ENCODE measurements at regions of chr3 and their contacts with region 1.

Region 1: GRCh38 chr3:126357295-126358037 is at the start of gene KLF15:
- DNase-seq: peak; percentile 87 to 95 (median 92)
- H3K4me3 ChIP-seq: peak within 1 kb of the TSS; percentile 91
- H3K27ac ChIP-seq: peak within 1 kb of the TSS; percentile 95 to 99
- H3K4me1 ChIP-seq: peaks cover 23% of the 10 kb centered on the region
- H3K27me3 ChIP-seq: no peaks in the 10 kb centered on the region
- CTCF ChIP-seq: no peak
- EP300 ChIP-seq: no peak
- POLR2A ChIP-seq: peak; percentile 85
- total RNA-seq, gene KLF15: 23.2 to 83.3 (median 40.0) TPM

Region 2: DNA sequence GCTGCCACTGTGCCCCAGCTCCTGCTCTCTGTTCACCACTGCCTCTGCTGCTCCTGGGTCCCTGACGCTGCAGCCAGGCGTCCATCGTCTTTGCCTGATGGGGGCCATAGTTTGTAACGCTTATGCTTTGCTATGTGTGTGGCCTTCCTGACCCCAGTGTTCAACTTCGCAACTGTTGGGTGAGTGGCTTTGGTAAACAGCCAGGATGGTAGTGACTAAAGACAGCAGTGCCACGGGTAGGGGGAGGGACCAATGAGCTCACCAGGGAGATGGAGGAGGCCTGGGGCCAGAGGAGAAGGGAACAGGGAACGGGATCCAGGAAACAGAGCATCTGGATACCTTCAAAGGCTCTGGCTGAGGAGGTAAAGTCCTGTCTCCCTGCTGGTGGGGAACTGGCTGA is 101.2 kb before region 1 on chr3:
- intact Hi-C with region 1: no loop called
- DNase-seq: no peak
- H3K4me3 ChIP-seq: no peak overlapping the region
- H3K27ac ChIP-seq: no peak overlapping the region
- H3K4me1 ChIP-seq: peaks cover 2% of the 10 kb centered on the region
- H3K27me3 ChIP-seq: no peaks in the 10 kb centered on the region
- CTCF ChIP-seq: no peak
- EP300 ChIP-seq: no peak
- POLR2A ChIP-seq: no peak

Region 3: DNA sequence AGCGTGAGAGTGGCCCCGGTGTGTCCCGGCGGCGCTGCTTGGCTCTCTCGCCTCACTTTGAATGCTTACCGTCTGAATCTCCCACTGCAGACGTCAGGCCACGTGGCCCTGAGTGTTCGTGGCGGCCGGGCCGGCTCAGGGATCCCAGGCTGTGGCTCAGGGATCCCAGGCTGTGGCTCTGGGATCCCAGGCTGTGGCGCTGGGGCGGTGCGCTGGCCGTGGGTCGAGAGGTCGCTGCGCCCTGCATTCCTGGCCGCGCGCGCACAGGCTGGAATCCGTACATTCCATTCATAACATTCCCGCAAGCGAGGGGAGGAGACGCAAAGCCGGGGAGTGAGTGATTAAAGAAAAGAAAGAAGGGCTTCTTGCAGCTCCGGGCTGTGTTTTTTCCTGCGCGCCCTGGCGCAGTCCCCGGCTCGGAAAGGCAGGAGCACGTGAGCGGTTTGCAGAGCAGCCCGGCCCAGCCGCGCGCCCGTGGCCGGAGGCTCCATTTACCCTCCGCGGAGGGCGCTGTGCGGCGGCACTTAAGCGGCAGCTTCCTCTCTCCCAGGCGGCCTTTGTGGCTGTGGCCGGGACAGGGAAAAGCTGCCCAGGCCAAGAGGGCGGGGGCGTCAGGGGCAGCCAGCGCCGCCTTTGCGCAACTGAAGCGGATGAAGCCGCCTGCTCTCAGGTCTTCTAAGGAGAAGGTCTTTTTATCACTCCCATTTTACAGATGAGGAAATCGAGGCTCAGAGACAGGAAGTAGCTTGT is 90.1 kb before region 1 on chr3:
- intact Hi-C with region 1: loop called in 3 of 4 experiments (anchors 2 to 5 kb)
- DNase-seq: peak; percentile 77 to 90 (median 82)
- H3K4me3 ChIP-seq: peak overlapping the region; percentile 27
- H3K27ac ChIP-seq: peak overlapping the region; percentile 83 to 90
- H3K4me1 ChIP-seq: peaks cover 13% of the 10 kb centered on the region
- H3K27me3 ChIP-seq: no peaks in the 10 kb centered on the region
- CTCF ChIP-seq: peak in 1 of 3 donors; percentile 15
- EP300 ChIP-seq: peak; percentile 48
- POLR2A ChIP-seq: peak; percentile 29

Region 4: GRCh38 chr3:126314790-126315658 is 42.4 kb before region 1 on chr3:
- intact Hi-C with region 1: loop called in 1 of 4 experiments (anchors 5 kb)
- DNase-seq: peak; percentile 53 to 64 (median 57)
- H3K4me3 ChIP-seq: no peak overlapping the region
- H3K27ac ChIP-seq: peak overlapping the region; percentile 55 to 62
- H3K4me1 ChIP-seq: peaks cover 28% of the 10 kb centered on the region
- H3K27me3 ChIP-seq: no peaks in the 10 kb centered on the region
- CTCF ChIP-seq: no peak
- EP300 ChIP-seq: no peak
- POLR2A ChIP-seq: no peak

Region 5: DNA sequence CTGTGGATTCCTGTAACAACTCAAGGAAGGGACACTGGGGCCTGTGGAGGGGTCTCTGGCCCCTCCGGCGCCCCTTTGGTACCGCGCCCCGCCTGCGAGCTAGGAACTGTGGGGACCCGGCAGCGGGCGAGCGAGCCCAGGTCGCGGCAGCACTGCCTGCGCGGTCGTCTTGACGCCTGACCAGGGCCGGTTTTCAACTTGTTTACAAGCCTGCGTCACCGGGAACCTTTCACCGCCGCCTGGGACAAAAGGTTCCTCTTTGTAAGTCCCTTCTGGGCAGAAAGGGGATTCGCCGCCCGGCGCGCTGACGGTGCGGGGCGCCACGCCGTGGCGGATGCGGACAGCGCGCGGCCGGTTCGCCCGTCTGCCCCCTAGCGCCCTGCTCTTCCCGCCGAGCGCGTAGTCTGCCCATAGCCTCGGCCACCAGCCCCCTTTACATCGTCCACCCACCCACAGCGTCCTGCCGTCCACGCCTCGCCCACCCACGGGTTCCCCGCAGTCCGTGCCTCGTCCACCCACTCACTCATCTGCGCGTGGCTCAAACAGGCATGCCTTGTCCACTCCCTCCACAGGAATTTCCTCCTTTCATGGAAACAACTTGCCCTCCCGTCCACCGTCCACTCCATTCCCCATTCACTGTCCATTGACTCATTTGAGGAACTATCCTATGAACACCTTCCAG is 31.8 kb after region 1 on chr3:
- intact Hi-C with region 1: loop called in 2 of 4 experiments (anchors 2 kb)
- DNase-seq: peak; percentile 87 to 96 (median 91)
- H3K4me3 ChIP-seq: peak overlapping the region; percentile 34
- H3K27ac ChIP-seq: peak overlapping the region; percentile 79 to 81
- H3K4me1 ChIP-seq: peaks cover 4% of the 10 kb centered on the region
- H3K27me3 ChIP-seq: no peaks in the 10 kb centered on the region
- CTCF ChIP-seq: peak; percentile 95 to 100 (median 100)
- EP300 ChIP-seq: peak; percentile 87
- POLR2A ChIP-seq: peak; percentile 73

Region 6: GRCh38 chr3:126475413-126476114 is 118.1 kb after region 1 on chr3 and contains the start of gene ZXDC:
- intact Hi-C with region 1: loop called in 1 of 4 experiments (anchors 5 kb)
- DNase-seq: peak; percentile 94 to 97 (median 95)
- H3K4me3 ChIP-seq: peak within 1 kb of the TSS; percentile 63
- H3K27ac ChIP-seq: peak within 1 kb of the TSS; percentile 90 to 93
- H3K4me1 ChIP-seq: peaks cover 23% of the 10 kb centered on the region
- H3K27me3 ChIP-seq: no peaks in the 10 kb centered on the region
- CTCF ChIP-seq: peak in 2 of 3 donors; percentile 56 to 64
- EP300 ChIP-seq: no peak
- POLR2A ChIP-seq: peak; percentile 74
- total RNA-seq, gene ZXDC: 32.2 to 47.3 (median 32.9) TPM